HCT116 (cell line): ENCODE measurements at regions of chr1 and their contacts with region 1.

Region 1: DNA sequence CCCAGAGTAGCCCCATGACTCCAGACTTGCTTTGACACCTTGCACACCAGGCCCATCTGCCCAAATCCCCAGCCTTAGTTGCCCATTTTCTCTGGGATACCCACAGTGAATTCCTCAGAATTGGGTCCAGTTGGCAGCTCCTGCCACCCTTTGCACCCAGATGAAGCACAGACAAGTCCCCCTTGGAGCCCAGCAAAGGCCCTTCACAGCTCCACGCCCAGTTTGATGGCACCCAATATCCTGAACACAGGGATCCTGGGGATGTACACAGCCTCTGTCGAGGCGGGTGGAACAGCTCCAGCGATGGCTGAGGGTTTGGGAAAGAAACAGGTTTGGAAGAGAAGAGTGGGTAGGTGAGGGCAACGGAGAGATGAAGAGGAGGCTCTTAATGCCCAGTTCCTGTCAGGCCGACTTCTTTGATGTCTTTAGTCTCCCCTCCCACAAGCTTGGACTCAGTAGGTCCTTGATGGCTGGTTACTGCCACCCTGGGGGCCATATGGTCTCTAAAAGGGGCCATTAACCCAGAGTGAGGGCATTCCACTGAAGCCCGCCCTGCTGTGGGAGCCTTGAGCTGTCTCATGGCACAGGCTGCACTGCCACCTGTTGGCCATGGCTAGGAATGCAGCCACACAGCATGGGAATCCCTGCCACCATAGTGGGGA is 21.7 kb downstream of the TMEM53 start:
- DNase-seq: no peak
- ATAC-seq: peak; percentile 90
- H3K4me3 ChIP-seq: no peak overlapping the region
- H3K27ac ChIP-seq: no peak overlapping the region
- H3K4me1 ChIP-seq: no peaks in the 10 kb centered on the region
- H3K27me3 ChIP-seq: no peaks in the 10 kb centered on the region
- CTCF ChIP-seq: peak; percentile 66 to 98 (median 96)
- POLR2A ChIP-seq: no peak
- RAD21 ChIP-seq: peak; percentile 85

Region 2: GRCh38 chr1:43796111-43796581 is 856.4 kb before region 1 on chr1:
- CTCF ChIA-PET with region 1: no interaction called
- POLR2A ChIA-PET with region 1: no interaction called
- RAD21 ChIA-PET with region 1: no interaction called
- intact Hi-C with region 1: no loop called
- DNase-seq: no peak
- ATAC-seq: no peak
- H3K4me3 ChIP-seq: no peak overlapping the region
- H3K27ac ChIP-seq: no peak overlapping the region
- H3K4me1 ChIP-seq: peaks cover 3% of the 10 kb centered on the region in 2 experiments; a peak in 2 of 4 replicates
- H3K27me3 ChIP-seq: no peaks in the 10 kb centered on the region
- CTCF ChIP-seq: no peak
- POLR2A ChIP-seq: no peak
- RAD21 ChIP-seq: no peak

Region 3: GRCh38 chr1:44089371-44090049 is 563.1 kb before region 1 on chr1:
- CTCF ChIA-PET with region 1: interaction called, 12 read pairs
- POLR2A ChIA-PET with region 1: no interaction called
- RAD21 ChIA-PET with region 1: no interaction called
- intact Hi-C with region 1: no loop called
- DNase-seq: no peak
- ATAC-seq: peak; percentile 70
- H3K4me3 ChIP-seq: no peak overlapping the region
- H3K27ac ChIP-seq: no peak overlapping the region
- H3K4me1 ChIP-seq: peaks cover 14 to 18% of the 10 kb centered on the region in 2 experiments
- H3K27me3 ChIP-seq: no peaks in the 10 kb centered on the region
- CTCF ChIP-seq: no peak
- POLR2A ChIP-seq: no peak
- RAD21 ChIP-seq: no peak

Region 4: GRCh38 chr1:44144962-44145756 is 507.4 kb before region 1 on chr1:
- CTCF ChIA-PET with region 1: no interaction called
- POLR2A ChIA-PET with region 1: no interaction called
- RAD21 ChIA-PET with region 1: no interaction called
- intact Hi-C with region 1: no loop called
- DNase-seq: no peak
- ATAC-seq: no peak
- H3K4me3 ChIP-seq: no peak overlapping the region
- H3K27ac ChIP-seq: no peak overlapping the region
- H3K4me1 ChIP-seq: 0 out of 4 replicates have a peak, but pooled peaks cover 0 to 3% of the 10 kb centered on the region in 2 experiments
- H3K27me3 ChIP-seq: no peaks in the 10 kb centered on the region
- CTCF ChIP-seq: no peak
- POLR2A ChIP-seq: no peak
- RAD21 ChIP-seq: no peak

Region 5: DNA sequence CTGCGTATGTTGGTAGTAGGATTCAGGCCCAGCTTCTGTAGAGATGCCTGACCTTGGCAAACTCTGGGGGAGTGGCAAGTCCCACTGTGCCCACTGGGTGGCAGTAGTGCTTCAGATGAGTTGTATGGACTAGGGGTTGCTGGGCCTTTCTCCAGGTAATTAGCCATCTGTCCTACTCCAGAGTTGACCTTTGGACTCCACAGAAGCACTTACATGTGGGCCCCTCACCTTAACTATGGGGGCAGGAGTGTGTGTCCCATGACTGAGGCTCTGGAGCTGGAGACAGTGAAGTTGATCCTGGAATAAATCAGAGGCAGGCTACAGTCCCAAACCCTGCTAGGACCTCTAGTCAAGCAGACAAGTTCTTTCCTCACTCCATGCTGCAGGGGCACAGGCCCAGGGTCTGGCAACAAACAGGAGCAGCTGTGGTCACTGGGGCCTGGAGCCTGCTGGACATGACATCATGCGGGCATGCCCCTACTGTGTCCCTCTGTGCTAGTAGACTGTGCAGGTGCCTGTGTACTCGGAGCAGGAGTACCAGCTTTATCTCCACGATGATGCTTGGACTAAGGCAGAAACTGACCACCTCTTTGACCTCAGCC is 434.7 kb before region 1 on chr1:
- CTCF ChIA-PET with region 1: interaction called, 18 read pairs
- POLR2A ChIA-PET with region 1: no interaction called
- RAD21 ChIA-PET with region 1: no interaction called
- intact Hi-C with region 1: loop called (anchors 1 kb)
- DNase-seq: peak; percentile 38
- ATAC-seq: peak; percentile 78
- H3K4me3 ChIP-seq: no peak overlapping the region
- H3K27ac ChIP-seq: no peak overlapping the region
- H3K4me1 ChIP-seq: peaks cover 6 to 16% of the 10 kb centered on the region in 2 experiments; a peak in 3 of 4 replicates
- H3K27me3 ChIP-seq: no peaks in the 10 kb centered on the region
- CTCF ChIP-seq: peak; percentile 72 to 96 (median 94)
- POLR2A ChIP-seq: no peak
- RAD21 ChIP-seq: peak; percentile 86

Region 6: DNA sequence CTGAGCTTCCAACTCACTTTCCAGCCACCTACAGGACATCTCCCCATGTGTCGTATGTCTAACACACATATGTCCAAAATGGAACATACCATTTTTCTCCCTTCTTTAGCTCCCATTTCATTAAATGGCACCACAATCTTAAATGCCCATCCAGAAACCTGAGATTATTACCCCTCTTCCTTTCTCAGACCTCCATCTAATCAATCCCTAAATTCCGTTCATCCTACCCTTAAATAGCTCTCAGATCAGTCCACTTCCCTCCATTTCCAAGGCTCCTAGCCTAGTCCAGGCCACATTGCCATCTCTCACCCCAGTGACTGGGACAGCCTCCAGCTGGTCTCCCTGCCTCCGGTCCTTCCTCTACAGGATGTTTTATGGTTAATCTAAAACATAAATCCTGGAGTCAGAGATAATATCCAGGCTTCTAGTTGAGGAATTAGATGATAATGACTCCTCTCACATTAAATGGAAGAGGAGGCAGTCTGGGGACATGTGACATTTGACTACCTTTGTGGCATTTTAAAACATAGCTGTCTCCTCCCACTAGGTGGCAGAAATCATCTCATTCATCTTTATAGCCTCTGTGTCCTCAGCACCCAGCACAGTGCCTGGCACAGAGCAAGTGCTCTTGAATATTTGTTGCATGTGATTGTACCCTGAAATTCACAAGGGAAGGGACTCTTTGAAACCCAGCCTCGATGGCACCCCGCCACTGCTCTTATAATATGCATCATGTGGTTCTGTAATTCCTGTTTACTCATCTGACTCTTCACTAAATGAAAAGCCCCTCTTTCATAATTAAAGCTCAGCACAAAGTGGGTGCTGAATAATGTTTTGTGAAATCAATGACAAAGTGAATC is 80.6 kb before region 1 on chr1:
- CTCF ChIA-PET with region 1: interaction called, 15 read pairs
- POLR2A ChIA-PET with region 1: no interaction called
- RAD21 ChIA-PET with region 1: no interaction called
- intact Hi-C with region 1: no loop called
- DNase-seq: no peak
- ATAC-seq: peak; percentile 91
- H3K4me3 ChIP-seq: no peak overlapping the region
- H3K27ac ChIP-seq: no peak overlapping the region
- H3K4me1 ChIP-seq: peaks cover 7 to 16% of the 10 kb centered on the region in 2 experiments
- H3K27me3 ChIP-seq: no peaks in the 10 kb centered on the region
- CTCF ChIP-seq: peak; percentile 38 to 65 (median 65); a peak in 5 of 6 replicates
- POLR2A ChIP-seq: no peak
- RAD21 ChIP-seq: peak; percentile 47

Region 7: GRCh38 chr1:44640200-44640853 is 12.2 kb before region 1 on chr1:
- CTCF ChIA-PET with region 1: interaction called, 10 read pairs
- POLR2A ChIA-PET with region 1: no interaction called
- RAD21 ChIA-PET with region 1: no interaction called
- intact Hi-C with region 1: no loop called
- DNase-seq: no peak
- ATAC-seq: 0 out of 2 replicates have a peak, but pooled peaks have one; percentile 19
- H3K4me3 ChIP-seq: no peak overlapping the region
- H3K27ac ChIP-seq: no peak overlapping the region
- H3K4me1 ChIP-seq: no peaks in the 10 kb centered on the region
- H3K27me3 ChIP-seq: no peaks in the 10 kb centered on the region
- CTCF ChIP-seq: no peak
- POLR2A ChIP-seq: no peak
- RAD21 ChIP-seq: no peak